Calu3 (cell line): ENCODE measurements at regions of chr9 and their contacts with region 1.

Region 1: DNA sequence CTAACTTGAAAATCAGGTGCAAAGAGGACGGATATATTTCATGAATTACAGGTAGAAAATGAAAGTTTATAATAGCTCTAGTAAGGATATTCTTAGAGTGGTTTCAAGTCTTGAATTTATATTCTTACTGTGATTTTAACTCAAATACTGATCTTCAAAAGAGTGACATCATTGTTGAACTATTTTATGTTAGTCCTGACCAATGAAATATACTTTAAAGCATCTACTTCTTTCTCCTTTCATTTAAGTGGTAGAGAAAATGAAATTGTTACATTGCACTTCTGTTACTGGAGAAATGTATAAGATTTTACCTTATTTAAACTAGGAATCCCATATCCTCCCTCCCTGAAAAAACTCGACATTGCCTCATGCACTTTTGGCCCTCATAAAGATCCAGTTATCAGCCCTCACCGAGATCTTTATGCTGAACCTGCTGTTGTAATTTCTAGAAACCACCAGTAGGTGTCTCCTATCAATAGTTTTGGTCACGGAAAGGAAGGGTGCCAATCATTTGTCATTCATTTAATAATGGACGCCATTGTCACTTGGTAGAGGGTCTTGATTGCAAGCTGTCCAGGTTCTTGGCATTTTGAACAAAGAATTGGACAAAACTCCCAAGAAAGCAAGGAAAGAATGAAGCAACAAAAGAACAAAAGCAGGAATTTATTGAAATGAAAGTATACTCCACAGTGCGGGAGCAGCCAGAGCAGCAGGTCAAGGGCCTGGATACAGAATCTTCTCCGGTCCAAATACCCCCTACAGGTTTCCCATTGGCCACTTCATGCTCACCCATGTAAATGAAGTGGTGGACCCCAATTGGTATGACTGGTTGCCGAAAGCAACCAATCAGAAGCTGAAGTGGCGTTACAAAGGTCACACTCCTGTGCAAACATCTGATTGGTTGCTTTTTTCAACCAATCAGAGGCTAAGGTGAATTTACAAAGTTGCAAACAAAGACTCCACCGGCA is 524.2 kb downstream of the PSAT1 start:
- DNase-seq: peak; percentile 1
- H3K4me3 Mint-ChIP-seq: no peak overlapping the region
- H3K27ac Mint-ChIP-seq: no peak overlapping the region
- H3K4me1 Mint-ChIP-seq: no peaks in the 10 kb centered on the region
- H3K27me3 Mint-ChIP-seq: no peaks in the 10 kb centered on the region
- CTCF ChIP-seq: peak; percentile 41

Region 2: GRCh38 chr9:78533500-78533899 is 287.6 kb before region 1 on chr9:
- CTCF ChIA-PET with region 1: no interaction called
- intact Hi-C with region 1: no loop called
- DNase-seq: no peak
- H3K4me3 Mint-ChIP-seq: no peak overlapping the region
- H3K27ac Mint-ChIP-seq: no peak overlapping the region
- H3K4me1 Mint-ChIP-seq: no peaks in the 10 kb centered on the region
- H3K27me3 Mint-ChIP-seq: no peaks in the 10 kb centered on the region
- CTCF ChIP-seq: no peak

Region 3: DNA sequence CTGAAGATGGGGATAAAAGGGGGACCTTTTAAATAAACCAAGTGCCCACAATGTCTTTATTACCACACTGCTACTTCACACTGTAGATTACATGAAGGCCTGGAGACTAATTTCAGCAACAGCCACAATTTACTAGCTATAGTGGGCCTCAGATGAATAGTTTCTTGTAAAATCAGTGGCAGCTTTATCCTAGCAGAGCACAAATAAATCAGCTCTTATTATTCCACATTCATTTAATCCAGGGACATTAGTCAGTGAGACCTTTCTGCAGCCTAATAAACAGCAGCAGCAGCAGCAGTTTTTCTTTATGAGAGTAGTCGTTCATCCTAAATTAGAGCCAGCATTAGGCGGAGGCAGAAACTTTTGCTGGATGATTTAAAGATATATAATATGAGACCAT is 18.1 kb after region 1 on chr9:
- CTCF ChIA-PET with region 1: no interaction called
- intact Hi-C with region 1: no loop called
- DNase-seq: no peak
- H3K4me3 Mint-ChIP-seq: no peak overlapping the region
- H3K27ac Mint-ChIP-seq: no peak overlapping the region
- H3K4me1 Mint-ChIP-seq: no peaks in the 10 kb centered on the region
- H3K27me3 Mint-ChIP-seq: no peaks in the 10 kb centered on the region
- CTCF ChIP-seq: no peak

Region 4: GRCh38 chr9:78909566-78909965 is 88.4 kb after region 1 on chr9:
- CTCF ChIA-PET with region 1: no interaction called
- intact Hi-C with region 1: no loop called
- DNase-seq: no peak
- H3K4me3 Mint-ChIP-seq: no peak overlapping the region
- H3K27ac Mint-ChIP-seq: no peak overlapping the region
- H3K4me1 Mint-ChIP-seq: no peaks in the 10 kb centered on the region
- H3K27me3 Mint-ChIP-seq: no peaks in the 10 kb centered on the region
- CTCF ChIP-seq: no peak

Region 5: GRCh38 chr9:79129865-79130480 is 308.8 kb after region 1 on chr9:
- CTCF ChIA-PET with region 1: no interaction called
- intact Hi-C with region 1: loop called (anchors 10 kb)
- DNase-seq: peak; percentile 28
- H3K4me3 Mint-ChIP-seq: no peak overlapping the region
- H3K27ac Mint-ChIP-seq: no peak overlapping the region
- H3K4me1 Mint-ChIP-seq: no peaks in the 10 kb centered on the region
- H3K27me3 Mint-ChIP-seq: no peaks in the 10 kb centered on the region
- CTCF ChIP-seq: peak; percentile 38